IMR-90 (cell line): ENCODE measurements at regions of chr19 and their contacts with region 1.

Region 1: DNA sequence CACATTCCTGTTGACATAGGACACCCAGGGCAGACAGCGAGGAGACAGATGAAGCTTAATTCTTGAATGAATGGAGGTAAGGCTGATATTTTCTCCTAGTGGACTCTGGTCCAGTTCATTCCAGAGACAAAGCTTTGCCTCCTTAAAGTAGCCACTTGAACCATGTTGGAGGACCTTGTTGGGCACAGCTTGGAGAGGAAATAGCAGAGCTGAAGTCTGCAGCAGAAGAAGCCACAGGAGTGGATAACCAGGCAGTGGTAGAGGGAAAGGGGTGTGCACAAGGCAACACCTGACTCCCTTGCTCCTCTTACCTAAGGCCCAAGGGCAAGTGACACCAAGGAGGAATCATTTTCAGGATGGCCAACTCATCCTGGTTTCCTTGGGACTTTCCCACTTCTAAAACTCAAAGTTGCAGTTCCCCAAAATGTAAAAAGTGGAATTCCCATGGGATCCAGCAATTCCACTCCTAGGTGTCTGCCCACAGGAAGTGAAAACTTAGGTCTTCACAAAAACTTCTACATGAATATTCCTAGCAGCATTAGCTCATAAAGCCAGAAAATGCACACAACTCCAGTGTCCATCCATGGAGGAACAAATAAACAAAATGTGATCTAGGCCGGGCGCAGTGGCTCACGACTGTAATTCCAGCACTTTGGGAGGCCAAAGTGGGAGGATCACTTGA is 6.6 kb upstream of the RFX2 start:
- DNase-seq: no peak
- ATAC-seq: no peak
- H3K4me3 ChIP-seq: no peak overlapping the region
- H3K27ac ChIP-seq: no peak overlapping the region
- H3K4me1 ChIP-seq: no peaks in the 10 kb centered on the region
- H3K27me3 ChIP-seq: peaks cover 7% of the 10 kb centered on the region
- CTCF ChIP-seq: no peak
- POLR2A ChIP-seq: no peak
- RAD21 ChIP-seq: no peak

Region 2: GRCh38 chr19:6056801-6057650 is 59.9 kb before region 1 on chr19:
- CTCF ChIA-PET with region 1: no interaction called
- POLR2A ChIA-PET with region 1: no interaction called
- dilution Hi-C with region 1: no loop called
- in situ Hi-C with region 1: loop called (anchors 5 kb)
- intact Hi-C with region 1: no loop called
- DNase-seq: peak; percentile 91
- ATAC-seq: peak; percentile 83
- H3K4me3 ChIP-seq: no peak overlapping the region
- H3K27ac ChIP-seq: peak overlapping the region; percentile 66
- H3K4me1 ChIP-seq: peaks cover 16% of the 10 kb centered on the region
- H3K27me3 ChIP-seq: no peaks in the 10 kb centered on the region
- CTCF ChIP-seq: no peak
- POLR2A ChIP-seq: peak; percentile 54
- RAD21 ChIP-seq: peak; percentile 42

Region 3: GRCh38 chr19:6103217-6103644 is 13.7 kb before region 1 on chr19:
- CTCF ChIA-PET with region 1: no interaction called
- POLR2A ChIA-PET with region 1: no interaction called
- dilution Hi-C with region 1: no loop called
- in situ Hi-C with region 1: no loop called
- intact Hi-C with region 1: no loop called
- DNase-seq: peak; percentile 87
- ATAC-seq: peak; percentile 81
- H3K4me3 ChIP-seq: no peak overlapping the region
- H3K27ac ChIP-seq: peak overlapping the region; percentile 2; the same call in 1 of the 2 replicates
- H3K4me1 ChIP-seq: peaks cover 17% of the 10 kb centered on the region
- H3K27me3 ChIP-seq: no peaks in the 10 kb centered on the region
- CTCF ChIP-seq: no peak
- POLR2A ChIP-seq: no peak
- RAD21 ChIP-seq: peak; percentile 13; the same call in 1 of the 2 replicates